Posterior cingulate gyrus (tissue), 11 donors: ENCODE measurements at regions of chr17 and their contacts with region 1.

Region 1: GRCh38 chr17:19447085-19447583 is 36.1 kb downstream of the RNF112 start:
- DNase-seq: peak; percentile 42 to 92 (median 66)

Region 2: GRCh38 chr17:19306160-19307111 is 140.7 kb before region 1 on chr17:
- intact Hi-C with region 1: no loop called
- DNase-seq: peak; percentile 68 to 98 (median 86)

Region 3: DNA sequence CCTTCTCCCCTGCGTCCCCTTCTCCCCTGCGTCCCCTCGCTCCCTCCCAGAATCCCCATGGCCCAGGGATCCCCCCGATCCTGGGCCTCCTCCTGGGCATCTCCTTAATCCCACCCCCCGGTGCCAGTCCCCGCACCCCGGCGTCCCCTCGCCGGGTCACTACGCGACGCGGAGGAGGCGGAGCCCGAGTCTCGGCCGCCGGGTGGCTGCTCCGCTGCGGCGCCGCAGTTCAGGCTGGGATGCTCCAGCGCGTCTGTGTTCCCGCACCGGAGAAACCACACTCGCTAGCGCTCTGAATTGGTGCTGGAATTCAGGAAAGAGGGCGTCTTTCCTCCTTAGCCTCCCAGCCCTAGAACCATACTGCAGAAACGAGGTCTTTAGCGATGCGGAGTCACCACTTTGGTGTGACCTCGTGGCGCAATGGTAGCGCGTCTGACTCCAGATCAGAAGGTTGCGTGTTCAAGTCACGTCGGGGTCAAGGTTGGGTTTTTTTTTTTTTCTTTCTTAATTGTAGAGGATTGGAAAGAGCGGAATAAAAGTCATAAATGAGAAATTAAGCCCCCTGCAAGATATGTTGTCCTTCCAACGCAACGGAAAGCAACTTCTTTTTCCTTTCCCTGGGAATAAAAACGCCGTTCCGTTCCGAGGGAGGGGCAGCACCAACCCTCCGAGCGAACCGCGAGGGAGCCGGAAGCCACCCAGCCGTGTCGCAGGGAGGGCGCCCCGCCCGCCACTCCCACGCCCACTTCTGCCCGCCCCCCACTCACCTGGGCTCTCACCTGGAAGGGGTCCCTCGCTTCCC is 60.8 kb after region 1 on chr17:
- intact Hi-C with region 1: loop called (anchors 5 kb)
- DNase-seq: peak; percentile 83 to 98 (median 92)